PC-9 (cell line): ENCODE measurements at regions of chr4 and their contacts with region 1.

Region 1: GRCh38 chr4:74014332-74014731 is 15.9 kb upstream of the CXCL5 start:
- DNase-seq: no peak
- H3K4me3 ChIP-seq: no peak overlapping the region
- H3K27ac ChIP-seq: no peak overlapping the region
- H3K4me1 ChIP-seq: no peaks in the 10 kb centered on the region
- H3K27me3 ChIP-seq: no peaks in the 10 kb centered on the region
- CTCF ChIP-seq: no peak

Region 2: DNA sequence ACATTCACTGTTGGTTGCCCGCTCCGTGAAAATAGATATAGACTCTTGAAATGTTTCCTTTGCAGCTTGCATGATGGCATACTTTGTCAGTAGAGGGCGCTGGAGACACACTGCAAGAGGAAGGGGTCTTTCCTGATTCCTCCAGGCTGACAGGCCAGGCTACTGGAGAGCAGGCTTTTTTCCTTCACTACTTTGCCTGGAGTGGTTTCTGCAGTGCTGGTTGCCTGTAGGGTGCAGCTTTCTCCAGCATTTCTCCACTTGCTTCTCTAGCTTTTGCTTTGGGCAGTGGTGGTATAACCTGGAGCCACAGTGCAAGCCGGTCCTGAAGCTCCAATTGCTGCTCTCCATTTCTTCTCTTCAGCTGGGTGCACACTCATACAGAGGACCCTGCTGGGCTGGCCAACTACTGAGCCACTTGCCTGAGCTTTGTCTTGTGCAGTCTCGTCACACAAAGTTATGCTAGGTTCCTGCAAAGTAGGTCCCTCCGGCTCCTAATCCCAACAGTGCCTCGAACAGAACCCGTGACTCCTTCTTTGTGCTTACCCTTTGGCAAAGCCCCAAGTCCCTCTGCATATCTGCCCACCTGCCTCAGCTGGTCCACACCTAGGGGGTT is 440.4 kb before region 1 on chr4:
- CTCF ChIA-PET with region 1: no interaction called
- POLR2A ChIA-PET with region 1: no interaction called
- intact Hi-C with region 1: no loop called
- DNase-seq: peak in 1 of 2 experiments; percentile 44
- H3K4me3 ChIP-seq: no peak overlapping the region
- H3K27ac ChIP-seq: no peak overlapping the region
- H3K4me1 ChIP-seq: no peaks in the 10 kb centered on the region
- H3K27me3 ChIP-seq: no peaks in the 10 kb centered on the region
- CTCF ChIP-seq: peak; percentile 72

Region 3: GRCh38 chr4:73869130-73870050 is 144.9 kb before region 1 on chr4 and contains the start of gene CXCL1:
- CTCF ChIA-PET with region 1: no interaction called
- POLR2A ChIA-PET with region 1: interaction called, 21 read pairs
- intact Hi-C with region 1: no loop called
- DNase-seq: peak in 1 of 2 experiments; percentile 15
- H3K4me3 ChIP-seq: peak within 1 kb of the TSS; percentile 65
- H3K27ac ChIP-seq: no peak within 1 kb of the TSS
- H3K4me1 ChIP-seq: no peaks in the 10 kb centered on the region; the same call in 1 of the 2 replicates
- H3K27me3 ChIP-seq: no peaks in the 10 kb centered on the region
- CTCF ChIP-seq: no peak
- total RNA-seq, gene CXCL1: 0.33 TPM in 1 of 2 replicates, not detected in the other

Region 4: DNA sequence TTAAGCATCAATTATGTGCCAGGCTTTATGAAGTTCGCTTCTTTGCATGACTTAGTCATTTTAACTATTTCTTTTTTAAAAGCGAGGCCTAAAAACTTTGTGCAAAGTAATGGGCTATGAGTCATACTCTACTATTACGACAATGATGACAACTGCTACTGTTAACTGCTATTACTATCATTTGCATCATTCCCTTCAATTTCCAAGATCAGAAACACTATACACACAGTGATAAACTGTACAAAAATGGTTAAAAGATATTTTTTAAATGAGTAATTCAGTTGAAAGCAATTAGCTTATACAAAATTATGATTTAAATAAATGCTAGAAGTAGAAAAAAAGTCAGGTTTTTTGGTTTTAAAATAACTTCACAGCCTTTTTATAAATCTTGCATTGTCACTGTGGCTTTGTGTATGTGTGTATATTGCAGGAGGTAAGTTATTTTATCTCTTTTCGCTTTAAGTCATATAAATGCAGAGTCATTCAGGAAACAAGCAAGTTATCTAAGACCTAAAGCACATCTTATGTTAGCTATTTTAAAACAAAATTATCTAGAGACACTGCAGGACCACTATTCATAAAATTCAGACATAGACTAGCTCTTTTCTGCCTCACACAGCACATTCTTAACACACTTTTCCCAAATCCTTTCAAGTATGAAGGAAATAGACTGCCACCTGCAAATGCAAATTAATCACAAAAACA is 42.7 kb after region 1 on chr4:
- CTCF ChIA-PET with region 1: no interaction called
- POLR2A ChIA-PET with region 1: no interaction called
- intact Hi-C with region 1: no loop called
- DNase-seq: peak in 1 of 2 experiments; percentile 47
- H3K4me3 ChIP-seq: no peak overlapping the region
- H3K27ac ChIP-seq: peak overlapping the region; percentile 99
- H3K4me1 ChIP-seq: peaks cover 14% of the 10 kb centered on the region
- H3K27me3 ChIP-seq: no peaks in the 10 kb centered on the region
- CTCF ChIP-seq: no peak